Esophagus muscularis mucosa (tissue), 4 donors: ENCODE measurements at regions of chr2 and their contacts with region 1.

Region 1: DNA sequence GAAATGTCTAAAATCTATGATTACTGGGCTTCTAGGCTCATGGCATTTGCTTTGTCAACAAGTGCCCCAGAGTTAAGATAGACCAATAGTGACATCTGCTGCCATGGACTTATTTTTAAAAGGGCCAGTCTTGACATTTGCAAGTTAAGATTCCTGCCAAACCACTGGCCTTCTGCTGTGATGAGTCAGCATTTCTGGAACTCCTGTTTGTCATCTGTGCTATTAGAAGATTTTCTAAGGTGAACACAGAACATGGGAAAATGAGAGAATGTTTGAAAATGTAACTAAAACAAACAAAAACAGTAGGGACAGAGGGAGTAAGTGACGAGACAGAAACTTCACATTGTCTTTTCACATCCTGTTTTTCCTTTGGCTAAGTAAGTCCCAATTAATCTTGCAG is 93.7 kb upstream of the WDR75 start:
- DNase-seq: no peak
- H3K4me3 ChIP-seq: no peak overlapping the region
- H3K27ac ChIP-seq: peak overlapping the region; percentile 64 to 80 (median 78)
- H3K4me1 ChIP-seq: peaks cover 6 to 62% (median 26%) of the 10 kb centered on the region in 4 donors
- H3K27me3 ChIP-seq: no peaks in the 10 kb centered on the region
- CTCF ChIP-seq: peak; percentile 18 to 42 (median 21)
- EP300 ChIP-seq: no peak
- POLR2A ChIP-seq: no peak

Region 2: DNA sequence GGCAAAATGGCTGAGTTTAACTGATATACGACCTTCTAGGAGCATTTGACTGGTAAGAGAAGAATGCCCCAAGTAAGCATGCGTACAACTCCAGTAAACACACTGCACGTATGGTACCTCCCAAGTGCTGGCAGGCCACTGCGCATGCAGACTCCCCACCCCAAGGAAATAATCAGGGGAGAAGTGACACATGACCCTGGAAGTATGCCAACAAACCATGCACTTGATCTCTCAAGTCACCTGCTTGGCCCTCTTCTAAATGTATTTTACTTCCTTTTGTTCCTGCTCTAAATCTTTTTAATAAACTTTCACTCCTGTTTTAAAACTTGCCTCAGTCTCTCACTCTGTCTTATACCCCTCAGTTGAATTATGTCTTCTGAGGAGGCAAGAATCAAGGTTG is 38.2 kb before region 1 on chr2:
- intact Hi-C with region 1: no loop called
- DNase-seq: no peak
- H3K4me3 ChIP-seq: no peak overlapping the region
- H3K27ac ChIP-seq: no peak overlapping the region
- H3K4me1 ChIP-seq: no peaks in the 10 kb centered on the region
- H3K27me3 ChIP-seq: no peaks in the 10 kb centered on the region
- CTCF ChIP-seq: no peak
- EP300 ChIP-seq: no peak
- POLR2A ChIP-seq: no peak

Region 3: DNA sequence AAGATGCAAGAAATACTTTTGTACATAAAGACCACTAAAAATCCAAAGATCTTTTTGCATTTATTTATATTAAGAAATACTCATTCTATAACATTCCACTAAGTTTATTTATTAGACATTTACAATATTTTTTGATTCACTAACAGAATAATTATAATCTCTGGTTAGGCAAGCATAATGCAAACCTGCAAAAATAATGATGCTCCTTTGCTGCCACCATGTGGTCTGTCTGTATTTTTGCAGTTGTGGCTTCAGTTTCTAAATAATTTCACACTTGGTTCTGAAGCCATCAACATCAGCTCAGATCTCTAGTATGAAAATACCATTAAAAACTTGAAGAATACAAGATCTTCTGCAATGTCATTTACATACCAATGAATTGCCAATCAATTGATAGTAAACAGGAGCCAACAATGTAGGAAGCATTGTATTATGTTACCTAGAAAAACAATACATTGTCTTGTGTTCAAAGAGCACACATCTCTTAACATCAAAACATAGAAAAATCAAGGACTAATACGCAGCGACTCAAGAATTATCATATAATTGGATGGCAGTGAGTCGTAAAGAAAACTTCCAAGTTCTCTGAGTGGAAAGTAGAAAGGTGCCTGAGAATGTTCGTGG is 64.9 kb after region 1 on chr2:
- intact Hi-C with region 1: loop called (anchors 10 kb)
- DNase-seq: no peak
- H3K4me3 ChIP-seq: no peak overlapping the region
- H3K27ac ChIP-seq: peak overlapping the region; percentile 71 to 80 (median 72)
- H3K4me1 ChIP-seq: peaks cover 0 to 43% (median 27%) of the 10 kb centered on the region in 4 donors
- H3K27me3 ChIP-seq: no peaks in the 10 kb centered on the region
- CTCF ChIP-seq: peak; percentile 76 to 80 (median 77)
- EP300 ChIP-seq: no peak
- POLR2A ChIP-seq: no peak

Region 4: GRCh38 chr2:189913821-189914220 is 566.3 kb after region 1 on chr2:
- intact Hi-C with region 1: no loop called
- DNase-seq: no peak
- H3K4me3 ChIP-seq: no peak overlapping the region
- H3K27ac ChIP-seq: no peak overlapping the region
- H3K4me1 ChIP-seq: no peaks in the 10 kb centered on the region
- H3K27me3 ChIP-seq: no peaks in the 10 kb centered on the region
- CTCF ChIP-seq: no peak
- EP300 ChIP-seq: no peak
- POLR2A ChIP-seq: no peak